ENCODE measurements at regions of chr4 and their contacts with region 1.

Region 1: DNA sequence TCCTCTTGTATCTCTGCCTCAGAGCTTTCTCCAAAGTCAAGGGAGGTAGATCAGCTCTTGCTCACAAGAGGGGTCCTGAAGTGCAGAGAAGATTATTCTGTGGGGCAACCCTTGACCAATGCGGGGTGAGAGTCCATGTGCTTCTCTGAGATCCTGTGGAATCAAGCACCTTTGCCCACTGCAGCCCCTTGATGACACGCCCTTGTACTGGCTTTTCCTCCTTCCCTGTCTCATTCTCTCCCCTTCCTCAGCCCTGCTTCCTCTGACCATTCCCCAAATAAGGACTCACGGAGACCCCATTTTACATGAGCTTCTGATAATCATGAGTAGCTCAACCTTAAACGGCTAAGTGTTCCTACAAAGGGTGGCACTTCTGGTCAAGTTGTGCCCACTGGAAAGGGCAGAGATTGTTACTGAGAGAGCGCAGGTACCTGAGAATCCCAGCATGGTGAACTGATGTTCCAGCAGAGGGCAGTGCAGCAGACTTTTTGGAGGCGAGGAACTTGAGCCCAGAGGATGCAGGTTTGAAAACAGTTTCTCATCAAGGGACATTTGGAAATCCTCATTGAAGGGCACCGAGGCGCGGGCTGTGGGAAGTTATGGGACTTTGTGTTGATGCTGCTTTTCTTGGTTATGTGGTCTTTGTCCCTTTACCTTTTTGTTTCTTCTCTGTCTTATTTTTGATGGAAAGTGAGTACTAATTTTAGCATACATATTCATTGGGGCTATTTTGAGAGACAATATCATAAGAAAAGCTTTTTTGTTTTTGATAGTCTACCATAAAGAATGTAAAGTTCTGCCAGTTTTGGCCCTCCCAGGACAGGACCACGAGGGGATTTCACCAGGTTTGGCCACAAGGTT is 201.3 kb downstream of the RBM46 start:
- DNase-seq: peak; percentile 17
- H3K4me3 ChIP-seq: no peak overlapping the region
- H3K27ac ChIP-seq: no peak overlapping the region
- H3K4me1 ChIP-seq: no peaks in the 10 kb centered on the region
- H3K27me3 ChIP-seq: no peaks in the 10 kb centered on the region
- CTCF ChIP-seq: peak; percentile 35 to 57 (median 47)
- POLR2A ChIP-seq: no peak

Region 2: DNA sequence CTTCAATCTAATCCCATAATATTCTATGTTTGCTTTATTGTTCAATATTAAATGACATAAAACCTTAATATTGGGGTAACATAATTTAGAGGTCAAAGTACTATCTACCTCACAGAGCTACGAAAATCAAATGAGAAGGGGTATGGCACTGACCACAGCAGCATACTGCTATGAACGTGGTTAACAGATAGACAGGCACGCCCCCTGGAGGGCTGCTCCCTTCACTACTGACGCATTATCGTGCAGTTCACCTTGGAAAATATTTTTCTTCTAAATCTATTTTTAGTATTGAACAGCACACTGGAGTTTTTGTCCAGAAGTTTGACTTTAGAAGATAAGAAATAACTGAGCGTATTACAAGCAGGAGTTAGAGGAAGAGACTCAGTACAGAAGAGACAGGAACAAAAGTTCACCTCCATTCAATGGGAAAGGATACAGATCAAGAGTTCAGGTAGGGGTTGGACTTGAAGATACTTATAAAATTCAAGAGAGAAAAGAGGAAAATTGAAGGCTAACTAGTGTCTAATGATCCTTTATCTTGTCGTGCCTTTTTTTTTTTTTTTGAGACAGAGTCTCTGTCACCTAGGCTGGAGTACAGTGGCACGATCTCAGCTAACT is 371.6 kb after region 1 on chr4:
- intact Hi-C with region 1: loop called (anchors 5 kb)
- DNase-seq: no peak
- H3K4me3 ChIP-seq: no peak overlapping the region
- H3K27ac ChIP-seq: no peak overlapping the region
- H3K4me1 ChIP-seq: no peaks in the 10 kb centered on the region
- H3K27me3 ChIP-seq: no peaks in the 10 kb centered on the region
- CTCF ChIP-seq: peak in 2 of 4 experiments; percentile 21 to 32
- POLR2A ChIP-seq: no peak

Measured in prostate gland (tissue), 2 donors.